ENCODE measurements at regions of chr12 and their contacts with region 1.

Region 1: GRCh38 chr12:10153271-10154144 is 18.4 kb downstream of the OLR1 start:
- DNase-seq: peak; percentile 74 to 77 (median 76)
- ATAC-seq: peak; percentile 96 to 97 (median 97)
- H3K4me3 ChIP-seq: peak overlapping the region; percentile 46 to 60 (median 59)
- H3K27ac ChIP-seq: peak overlapping the region; percentile 75 to 80 (median 79)
- H3K4me1 ChIP-seq: no peaks in the 10 kb centered on the region
- H3K27me3 ChIP-seq: no peaks in the 10 kb centered on the region
- CTCF ChIP-seq: peak; percentile 75 to 86 (median 79)
- POLR2A ChIP-seq: peak; percentile 41

Region 2: GRCh38 chr12:9856151-9856550 is 297.4 kb before region 1 on chr12:
- intact Hi-C with region 1: no loop called
- DNase-seq: no peak
- ATAC-seq: peak in 2 of 4 donors; percentile 32 to 39
- H3K4me3 ChIP-seq: no peak overlapping the region
- H3K27ac ChIP-seq: no peak overlapping the region
- H3K4me1 ChIP-seq: no peaks in the 10 kb centered on the region
- H3K27me3 ChIP-seq: no peaks in the 10 kb centered on the region
- CTCF ChIP-seq: no peak
- POLR2A ChIP-seq: no peak

Region 3: GRCh38 chr12:10186299-10186698 is 32.8 kb after region 1 on chr12:
- intact Hi-C with region 1: loop called in 1 of 2 experiments (anchors 5 kb)
- DNase-seq: peak; percentile 49 to 66 (median 65)
- ATAC-seq: peak in 3 of 4 donors; percentile 49 to 65 (median 59)
- H3K4me3 ChIP-seq: no peak overlapping the region
- H3K27ac ChIP-seq: no peak overlapping the region
- H3K4me1 ChIP-seq: no peaks in the 10 kb centered on the region
- H3K27me3 ChIP-seq: no peaks in the 10 kb centered on the region
- CTCF ChIP-seq: no peak
- POLR2A ChIP-seq: no peak

Region 4: DNA sequence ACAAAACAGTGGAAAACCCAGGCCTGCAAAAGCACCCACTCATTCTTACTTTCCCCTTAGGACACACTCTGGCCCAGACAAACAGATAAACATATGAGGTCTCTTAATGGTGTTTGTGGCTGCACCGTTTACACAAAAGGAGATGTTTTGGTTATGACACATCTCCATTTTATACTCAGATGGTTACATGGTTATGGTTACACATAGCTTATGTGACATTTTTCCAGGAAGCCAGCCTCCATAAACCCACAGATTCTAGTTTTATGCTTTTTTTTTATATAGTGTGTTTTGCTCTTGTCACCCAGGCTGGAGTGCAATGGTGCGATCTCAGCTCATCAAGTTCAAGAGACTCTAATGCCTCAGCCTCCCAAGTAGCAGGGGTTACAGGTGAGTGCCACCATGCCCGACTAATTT is 150.7 kb after region 1 on chr12:
- intact Hi-C with region 1: no loop called
- DNase-seq: no peak
- ATAC-seq: peak in 1 of 4 donors; percentile 15
- H3K4me3 ChIP-seq: no peak overlapping the region
- H3K27ac ChIP-seq: no peak overlapping the region
- H3K4me1 ChIP-seq: no peaks in the 10 kb centered on the region
- H3K27me3 ChIP-seq: no peaks in the 10 kb centered on the region
- CTCF ChIP-seq: no peak
- POLR2A ChIP-seq: no peak

Measured in right lobe of liver (tissue), 6 donors.